Gastrocnemius medialis (tissue), 4 donors: ENCODE measurements at regions of chr9 and their contacts with region 1.

Region 1: DNA sequence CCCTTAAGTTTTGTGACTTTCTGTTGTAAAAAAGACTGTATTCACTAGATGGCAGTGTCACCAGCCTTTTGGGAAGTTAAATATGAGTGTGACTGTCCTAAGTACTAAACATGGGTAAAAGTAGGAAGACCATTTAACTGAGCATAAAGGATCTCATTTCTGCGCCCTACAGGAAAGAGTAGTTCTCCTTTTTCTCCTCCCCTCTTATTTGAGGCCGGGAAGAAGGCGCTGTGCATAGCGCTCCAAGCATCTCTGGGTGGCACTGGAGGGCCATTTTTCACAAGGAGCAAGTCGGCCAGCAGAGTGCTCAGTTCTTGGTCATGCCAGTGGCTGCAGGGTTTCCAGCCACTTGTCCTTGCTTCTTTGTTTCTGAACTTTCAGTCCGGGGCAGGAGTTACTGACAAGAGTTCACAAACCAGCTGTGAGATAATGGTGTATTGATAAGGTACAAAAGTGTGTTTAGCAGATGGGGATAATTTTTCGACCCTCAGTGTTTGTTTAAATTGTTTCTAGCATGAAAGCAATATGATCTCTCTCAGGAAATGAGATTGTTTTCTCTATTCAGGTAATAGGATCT is 227.6 kb upstream of the DMRT1 start:
- DNase-seq: peak; percentile 72 to 80
- ATAC-seq: peak; percentile 95 to 99
- H3K4me3 ChIP-seq: peak overlapping the region in 1 of 4 donors; percentile 14
- H3K27ac ChIP-seq: peak overlapping the region in 3 of 4 donors; percentile 35 to 43 (median 42)
- H3K4me1 ChIP-seq: peaks cover 7% of the 10 kb centered on the region in 2 donors
- H3K27me3 ChIP-seq: no peaks in the 10 kb centered on the region
- CTCF ChIP-seq: peak in 4 of 5 experiments; percentile 80 to 96 (median 82)
- POLR2A ChIP-seq: no peak

Region 2: DNA sequence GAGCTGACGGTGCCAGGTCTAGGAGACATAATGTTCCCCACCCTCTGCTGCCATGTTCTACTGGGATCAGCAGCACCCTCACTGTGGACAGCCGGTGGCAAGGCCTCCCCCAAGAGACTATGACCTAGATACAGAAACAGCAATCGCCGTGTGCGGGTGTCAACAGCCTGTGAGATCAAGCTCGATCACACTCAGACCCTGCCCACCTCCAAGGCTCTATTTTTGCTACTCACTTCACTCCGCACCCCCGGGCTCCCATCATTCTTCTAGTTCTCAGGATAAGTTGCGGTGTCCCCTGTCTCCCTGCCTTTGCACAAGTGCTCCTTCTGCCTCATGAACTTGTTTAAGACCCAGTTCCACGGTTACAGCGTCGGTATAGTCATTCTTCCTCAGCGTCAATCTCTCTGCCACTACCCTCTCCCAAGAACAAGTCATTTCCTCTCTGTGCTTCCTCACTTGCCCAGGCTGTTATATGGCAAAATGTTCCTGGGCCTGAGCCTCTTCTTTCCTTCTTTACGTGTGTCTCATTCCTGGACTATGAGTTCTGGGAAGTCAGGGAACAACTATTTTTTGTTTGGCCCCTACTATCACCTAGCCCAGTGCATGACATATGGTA is 404.6 kb before region 1 on chr9:
- in situ Hi-C with region 1: no loop called
- intact Hi-C with region 1: no loop called
- DNase-seq: no peak
- ATAC-seq: no peak
- H3K4me3 ChIP-seq: no peak overlapping the region
- H3K27ac ChIP-seq: no peak overlapping the region
- H3K4me1 ChIP-seq: no peaks in the 10 kb centered on the region
- H3K27me3 ChIP-seq: no peaks in the 10 kb centered on the region
- CTCF ChIP-seq: no peak
- POLR2A ChIP-seq: no peak

Region 3: GRCh38 chr9:677461-678097 is 63.7 kb after region 1 on chr9:
- in situ Hi-C with region 1: loop called in 1 of 4 experiments (anchors 10 kb)
- intact Hi-C with region 1: no loop called
- DNase-seq: no peak
- ATAC-seq: peak; percentile 64 to 67
- H3K4me3 ChIP-seq: peak overlapping the region; percentile 45 to 71 (median 52)
- H3K27ac ChIP-seq: peak overlapping the region in 3 of 4 donors; percentile 33 to 70 (median 36)
- H3K4me1 ChIP-seq: peaks cover 18 to 19% of the 10 kb centered on the region in 2 donors
- H3K27me3 ChIP-seq: no peaks in the 10 kb centered on the region
- CTCF ChIP-seq: no peak
- POLR2A ChIP-seq: no peak

Region 4: GRCh38 chr9:757246-757881 is 143.5 kb after region 1 on chr9:
- in situ Hi-C with region 1: loop called in 3 of 4 experiments (anchors 5 kb)
- intact Hi-C with region 1: no loop called
- DNase-seq: no peak
- ATAC-seq: peak; percentile 32 to 66
- H3K4me3 ChIP-seq: no peak overlapping the region
- H3K27ac ChIP-seq: no peak overlapping the region
- H3K4me1 ChIP-seq: peaks cover 9 to 11% of the 10 kb centered on the region in 2 donors
- H3K27me3 ChIP-seq: no peaks in the 10 kb centered on the region
- CTCF ChIP-seq: peak; percentile 31 to 61 (median 41)
- POLR2A ChIP-seq: no peak

Region 5: GRCh38 chr9:806285-807156 is 192.7 kb after region 1 on chr9:
- in situ Hi-C with region 1: no loop called
- intact Hi-C with region 1: loop called (anchors 1 kb)
- DNase-seq: no peak
- ATAC-seq: no peak
- H3K4me3 ChIP-seq: no peak overlapping the region
- H3K27ac ChIP-seq: no peak overlapping the region
- H3K4me1 ChIP-seq: no peaks in the 10 kb centered on the region
- H3K27me3 ChIP-seq: no peaks in the 10 kb centered on the region
- CTCF ChIP-seq: peak in 3 of 5 experiments; percentile 35 to 61 (median 61)
- POLR2A ChIP-seq: no peak